ENCODE measurements at regions of chr3 and their contacts with region 1.

Region 1: GRCh38 chr3:172106989-172107388 is 67.6 kb downstream of the FNDC3B start:
- DNase-seq: peak; percentile 34 to 87 (median 77)
- H3K4me3 ChIP-seq: peak overlapping the region; percentile 42
- H3K4me3 Mint-ChIP-seq: peak overlapping the region; percentile 69 to 88 (median 80)
- H3K27ac ChIP-seq: peak overlapping the region; percentile 5
- H3K27ac Mint-ChIP-seq: peak overlapping the region; percentile 72 to 96 (median 94)
- H3K4me1 ChIP-seq: peaks cover 78% of the 10 kb centered on the region
- H3K4me1 Mint-ChIP-seq: peaks cover 69 to 84% (median 82%) of the 10 kb centered on the region in 3 donors
- H3K27me3 ChIP-seq: no peaks in the 10 kb centered on the region
- H3K27me3 Mint-ChIP-seq: peaks cover 0 to 2% of the 10 kb centered on the region in 2 donors

Region 2: GRCh38 chr3:172078244-172078643 is 28.7 kb before region 1 on chr3:
- CTCF ChIA-PET with region 1: interaction called, 3 read pairs
- POLR2A ChIA-PET with region 1: interaction called, 14 read pairs
- DNase-seq: no peak
- H3K4me3 ChIP-seq: no peak overlapping the region
- H3K4me3 Mint-ChIP-seq: no peak overlapping the region
- H3K27ac ChIP-seq: no peak overlapping the region
- H3K27ac Mint-ChIP-seq: no peak overlapping the region
- H3K4me1 ChIP-seq: no peaks in the 10 kb centered on the region
- H3K4me1 Mint-ChIP-seq: peaks cover 4 to 24% (median 23%) of the 10 kb centered on the region in 3 donors
- H3K27me3 ChIP-seq: no peaks in the 10 kb centered on the region
- H3K27me3 Mint-ChIP-seq: no peaks in the 10 kb centered on the region

Measured in CD8-positive, alpha-beta memory T cell (primary cell).